ENCODE measurements at regions of chr14 and their contacts with region 1.

Region 1: DNA sequence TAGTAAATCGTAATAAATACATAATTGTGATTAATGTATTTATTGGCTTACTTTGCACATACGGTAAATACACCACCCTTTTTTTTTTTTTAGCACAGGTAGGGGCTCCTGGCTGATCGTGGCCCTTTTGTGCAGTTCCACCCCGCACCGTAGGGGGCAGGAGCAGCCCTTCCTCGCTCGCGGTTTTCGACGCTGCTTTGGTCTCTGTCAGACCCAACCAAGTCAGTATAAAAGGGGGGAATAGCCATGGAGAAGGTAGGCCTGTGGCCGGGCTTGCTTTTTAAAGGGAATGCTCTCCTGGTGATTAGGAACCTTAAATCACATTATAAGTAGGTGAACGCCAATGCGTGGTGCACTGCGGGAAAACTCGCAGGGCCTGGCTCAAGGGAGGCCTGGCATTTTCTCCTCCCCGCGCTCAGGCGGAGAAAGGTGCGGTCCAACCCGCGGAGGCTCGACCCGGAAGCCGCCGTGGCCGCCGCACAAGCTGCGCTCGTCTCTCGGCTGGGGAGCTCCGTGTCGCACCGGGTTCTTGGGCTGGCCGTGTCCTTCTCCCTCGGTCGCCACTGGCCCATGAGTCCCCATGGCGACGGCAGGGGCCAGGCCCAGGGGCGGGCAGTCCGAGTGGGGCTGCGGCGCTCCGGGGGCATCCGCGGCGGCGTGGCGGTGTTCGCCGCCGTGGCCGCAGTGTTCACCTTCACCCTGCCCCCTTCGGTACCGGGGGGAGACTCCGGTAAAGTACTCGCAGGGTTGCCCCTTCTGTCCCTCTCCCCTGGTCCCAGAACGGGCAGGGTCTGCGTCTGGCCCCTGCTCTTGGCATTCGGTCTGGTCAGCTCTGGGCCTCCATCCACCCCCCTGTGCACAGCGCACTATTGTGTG is at the start of gene TMEM260:
- DNase-seq: peak; percentile 77
- H3K4me3 ChIP-seq: peak within 1 kb of the TSS; percentile 93
- H3K27ac ChIP-seq: peak within 1 kb of the TSS; percentile 71
- H3K27me3 ChIP-seq: peaks cover 2% of the 10 kb centered on the region
- CTCF ChIP-seq: peak; percentile 91
- polyA plus RNA-seq, gene TMEM260: 13.8 and 18.8 TPM in 2 replicates

Region 2: GRCh38 chr14:55645145-55645544 is 934.4 kb before region 1 on chr14:
- CTCF ChIA-PET with region 1: no interaction called
- POLR2A ChIA-PET with region 1: no interaction called
- DNase-seq: no peak
- H3K4me3 ChIP-seq: no peak overlapping the region
- H3K27ac ChIP-seq: no peak overlapping the region
- H3K27me3 ChIP-seq: no peaks in the 10 kb centered on the region
- CTCF ChIP-seq: no peak

Region 3: DNA sequence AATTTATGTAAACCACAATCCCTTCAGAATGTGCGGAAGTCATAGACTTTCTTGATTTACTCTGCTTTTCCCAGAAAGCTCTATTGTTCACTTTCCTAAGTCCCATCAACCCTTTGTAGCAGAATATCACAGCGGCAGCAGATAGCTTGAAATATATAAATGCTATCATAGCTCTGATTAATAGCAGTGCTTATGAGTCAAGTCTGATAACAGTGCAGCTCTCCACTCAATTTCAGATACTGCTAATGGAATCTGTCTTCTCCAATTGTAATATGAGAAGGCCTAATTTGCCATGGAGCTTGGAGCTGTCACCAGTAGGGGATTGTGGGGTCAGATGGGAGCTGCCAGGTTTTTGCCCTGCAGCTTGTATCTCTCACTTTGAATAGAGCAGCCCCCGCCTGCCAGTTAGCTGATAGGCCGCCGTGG is 11.0 kb after region 1 on chr14:
- CTCF ChIA-PET with region 1: interaction called, 32 read pairs
- POLR2A ChIA-PET with region 1: no interaction called
- DNase-seq: no peak
- H3K4me3 ChIP-seq: no peak overlapping the region
- H3K27ac ChIP-seq: no peak overlapping the region
- H3K27me3 ChIP-seq: no peaks in the 10 kb centered on the region
- CTCF ChIP-seq: no peak

Measured in AG04450 (cell line).